ENCODE measurements at regions of chr20 and their contacts with region 1.

Region 1: DNA sequence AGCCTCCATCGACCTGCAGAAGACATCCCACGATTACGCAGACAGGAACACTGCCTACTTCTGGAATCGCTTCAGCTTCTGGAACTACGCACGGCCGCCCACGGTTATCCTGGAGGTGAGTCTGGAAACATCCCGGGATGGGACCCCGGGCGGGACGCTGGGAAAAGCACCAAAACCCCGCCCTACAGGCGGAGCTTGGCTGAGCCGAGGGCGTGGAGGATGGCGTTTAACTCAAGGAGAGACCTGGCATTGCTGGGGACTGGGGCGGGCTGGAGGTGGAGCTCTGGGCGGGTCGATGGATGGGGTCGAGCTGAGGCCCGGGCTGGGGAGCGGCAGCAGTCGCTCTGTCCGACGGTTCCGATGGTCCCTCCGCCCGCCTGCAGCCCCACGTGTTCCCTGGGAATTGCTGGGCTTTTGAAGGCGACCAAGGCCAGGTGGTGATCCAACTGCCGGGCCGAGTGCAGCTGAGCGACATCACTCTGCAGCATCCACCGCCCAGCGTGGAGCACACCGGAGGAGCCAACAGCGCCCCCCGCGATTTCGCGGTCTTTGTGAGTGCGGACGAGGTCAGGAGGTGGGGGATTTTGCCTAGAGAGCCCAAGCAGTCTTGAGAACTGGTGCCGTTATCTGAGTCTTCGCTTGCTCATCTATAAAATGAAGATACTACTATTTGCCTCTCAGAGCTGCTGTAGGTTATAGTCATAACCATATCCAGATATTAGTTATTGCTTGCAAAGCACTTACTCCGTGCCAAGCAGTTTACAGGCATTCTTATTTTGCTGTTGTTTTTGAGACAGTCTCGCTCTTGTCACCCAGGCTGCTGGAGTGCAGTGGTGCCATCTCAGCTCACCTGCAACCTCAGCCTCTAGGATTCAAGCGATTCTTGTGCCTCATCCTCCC is 3.8 kb downstream of the SPAG4 start:
- DNase-seq: peak; percentile 80 to 81
- H3K4me3 ChIP-seq: peak overlapping the region in 2 of 3 donors; percentile 43 to 44
- H3K27ac ChIP-seq: no peak overlapping the region
- H3K4me1 ChIP-seq: peaks cover 32 to 37% of the 10 kb centered on the region in 2 donors
- H3K27me3 ChIP-seq: no peaks in the 10 kb centered on the region
- CTCF ChIP-seq: peak in 3 of 6 experiments; percentile 10 to 26 (median 24)
- POLR2A ChIP-seq: no peak

Region 2: DNA sequence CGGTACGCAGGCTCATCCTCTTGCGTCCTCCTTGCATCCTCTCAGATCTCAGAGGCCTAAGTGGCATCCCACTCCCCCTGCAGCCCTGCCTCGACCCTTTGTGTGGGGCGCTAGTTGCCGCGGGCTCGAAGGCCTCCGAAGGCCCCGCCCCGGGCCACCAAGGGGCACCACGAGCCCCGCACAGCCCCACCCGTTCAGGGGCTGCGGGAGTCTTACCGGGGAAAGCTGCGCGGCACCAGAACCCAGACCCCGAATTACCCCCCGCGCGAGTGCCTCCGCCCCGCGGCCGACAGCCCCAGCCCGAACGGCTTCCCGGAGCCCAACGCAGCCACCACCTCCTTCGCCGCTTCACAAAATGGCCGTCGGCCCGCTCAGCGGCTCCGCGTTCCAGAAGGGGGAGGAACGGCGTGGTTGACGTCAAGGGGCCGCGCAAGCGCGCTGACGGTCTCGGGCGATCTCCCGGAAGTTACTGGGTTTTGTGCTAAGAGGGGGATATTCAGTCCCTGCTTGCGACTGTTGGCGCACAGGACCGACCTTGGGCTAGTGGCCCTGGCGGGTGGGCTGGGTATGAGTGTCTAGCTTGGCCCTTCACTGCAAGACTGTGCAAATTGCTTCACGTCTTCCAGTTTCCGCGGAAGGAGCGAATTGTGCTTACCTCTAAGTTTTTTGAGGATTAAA is 45.2 kb after region 1 on chr20 and contains the starts of genes CPNE1 and RBM12:
- intact Hi-C with region 1: loop called (anchors 2 kb)
- DNase-seq: peak; percentile 88 to 94
- H3K4me3 ChIP-seq: peak within 1 kb of the TSS; percentile 25 to 86 (median 77)
- H3K27ac ChIP-seq: peak within 1 kb of the TSS; percentile 97 to 100 (median 98)
- H3K4me1 ChIP-seq: peaks cover 32% of the 10 kb centered on the region in 2 donors
- H3K27me3 ChIP-seq: no peaks in the 10 kb centered on the region
- CTCF ChIP-seq: no peak
- POLR2A ChIP-seq: peak; percentile 7 to 96
- total RNA-seq, gene CPNE1: 80.6 to 166 (median 131) TPM
- total RNA-seq, gene RBM12: 30.5 to 44.9 (median 35.7) TPM

Region 3: DNA sequence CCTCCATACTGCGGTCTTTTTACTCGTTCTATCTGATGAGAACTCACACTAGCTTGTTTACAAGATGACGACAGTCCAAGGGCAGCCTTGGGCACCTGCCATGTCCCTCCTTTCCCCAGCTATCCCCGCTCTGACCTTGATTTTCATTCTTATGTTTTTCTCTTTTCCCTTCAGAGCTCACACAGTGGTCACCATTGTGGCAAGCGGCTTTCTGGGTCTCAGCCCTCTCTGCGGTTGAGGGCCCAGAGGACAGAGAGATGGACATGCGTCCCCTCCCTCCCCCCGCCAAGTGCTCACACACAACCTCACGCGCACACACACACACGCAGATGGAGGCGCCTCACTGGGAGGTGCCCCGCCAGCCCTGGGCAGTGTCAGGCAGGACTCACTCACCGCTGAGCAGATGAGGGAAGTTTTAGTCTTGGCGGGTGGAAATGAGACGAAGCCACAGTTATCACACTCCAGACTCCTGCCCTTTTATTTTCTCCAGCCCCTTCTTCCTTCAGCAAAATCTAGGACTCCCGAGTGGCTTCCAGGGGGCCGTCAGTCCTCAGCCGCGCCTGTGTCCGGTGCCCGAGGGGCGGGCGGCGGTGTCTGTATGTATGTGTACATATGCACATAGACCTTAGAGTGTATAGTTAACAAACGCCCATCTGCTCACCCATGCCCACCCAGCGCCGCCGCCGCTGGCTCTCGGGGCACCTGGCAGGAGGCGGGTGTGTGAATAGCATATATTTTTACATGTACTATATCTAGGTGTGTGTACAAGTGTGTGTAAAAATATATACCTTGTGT is 908.1 kb after region 1 on chr20:
- intact Hi-C with region 1: no loop called
- DNase-seq: no peak
- H3K4me3 ChIP-seq: no peak overlapping the region
- H3K27ac ChIP-seq: no peak overlapping the region
- H3K4me1 ChIP-seq: peaks cover 0 to 4% of the 10 kb centered on the region in 2 donors
- H3K27me3 ChIP-seq: no peaks in the 10 kb centered on the region
- CTCF ChIP-seq: no peak
- POLR2A ChIP-seq: no peak